Activated CD4-positive, alpha-beta T cell treated with anti-CD3 and anti-CD28 coated beads, Interleukin-2, amount 10 ng/mL, durations not matched to agents 7 days and 5 days (primary cell): ENCODE measurements at regions of chr10 and their contacts with region 1.

Region 1: DNA sequence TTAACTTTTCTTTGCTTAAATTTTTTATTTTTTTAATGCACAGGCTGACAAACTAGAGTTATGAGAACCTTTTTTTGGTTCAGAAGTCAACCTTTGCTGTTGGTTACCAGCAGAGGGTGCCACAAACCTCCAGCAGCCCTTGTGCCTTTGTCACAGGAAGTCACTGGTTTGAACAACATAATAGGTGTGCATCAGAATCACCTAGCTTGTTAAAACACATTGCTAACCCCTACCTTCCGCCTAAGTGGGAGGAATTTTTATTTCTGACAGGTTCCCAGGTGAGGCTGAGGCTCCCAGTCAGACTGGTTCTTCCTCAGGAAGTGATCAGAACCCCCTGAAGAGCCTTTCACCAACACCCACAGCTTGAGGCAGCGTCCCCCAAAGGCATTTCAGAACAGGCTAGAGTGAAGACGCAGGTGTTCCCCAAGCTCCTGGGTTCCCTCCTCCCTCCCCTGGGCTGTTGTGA is 22.6 kb upstream of the VDAC2 start:
- DNase-seq: peak; percentile 83
- H3K4me3 Mint-ChIP-seq: no peak overlapping the region
- H3K27ac Mint-ChIP-seq: peak overlapping the region; percentile 89
- H3K4me1 Mint-ChIP-seq: peaks cover 17% of the 10 kb centered on the region
- H3K27me3 Mint-ChIP-seq: no peaks in the 10 kb centered on the region

Region 2: DNA sequence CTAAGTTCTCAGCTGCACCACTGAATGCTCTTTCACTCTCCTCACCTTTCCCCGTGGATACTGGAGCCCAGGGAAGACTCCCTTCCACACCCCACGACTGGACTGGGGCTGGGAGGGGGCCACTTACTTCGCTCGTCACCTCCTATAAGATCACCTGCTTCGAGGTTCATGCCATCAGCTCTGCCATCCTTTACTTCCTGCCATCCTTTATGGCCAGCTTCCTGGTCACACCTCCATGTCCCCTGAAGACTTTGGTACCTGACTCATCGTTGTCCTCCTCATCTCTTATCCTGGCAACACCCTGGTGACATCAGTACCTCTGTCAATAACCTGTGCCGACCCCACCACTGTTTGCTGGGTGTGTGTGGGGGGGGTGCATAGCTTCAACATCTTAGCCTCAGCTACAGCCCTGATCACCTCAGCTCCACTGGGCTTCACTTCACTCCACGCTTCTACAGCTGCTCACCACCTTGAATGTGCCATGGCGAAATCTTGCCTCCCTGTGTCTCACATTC is 13.9 kb after region 1 on chr10:
- CTCF ChIA-PET with region 1: interaction called, 10 read pairs
- POLR2A ChIA-PET with region 1: no interaction called
- DNase-seq: no peak
- H3K4me3 Mint-ChIP-seq: no peak overlapping the region
- H3K27ac Mint-ChIP-seq: no peak overlapping the region
- H3K4me1 Mint-ChIP-seq: peaks cover 4% of the 10 kb centered on the region
- H3K27me3 Mint-ChIP-seq: no peaks in the 10 kb centered on the region

Region 3: GRCh38 chr10:75226656-75227055 is 38.7 kb after region 1 on chr10:
- CTCF ChIA-PET with region 1: interaction called, 14 read pairs
- POLR2A ChIA-PET with region 1: interaction called, 4 read pairs
- DNase-seq: no peak
- H3K4me3 Mint-ChIP-seq: no peak overlapping the region
- H3K27ac Mint-ChIP-seq: no peak overlapping the region
- H3K4me1 Mint-ChIP-seq: peaks cover 54% of the 10 kb centered on the region
- H3K27me3 Mint-ChIP-seq: no peaks in the 10 kb centered on the region